Activated T-helper 1 cell treated with anti-CD3 and anti-CD28 coated beads, Interleukin-12 subunit alpha, Interleukin-12 subunit beta, Interleukin-2, Interleukin-4 antibody, amounts not matched to agents 30 ng/mL and 10 ng/mL and 1 ng/mL, durations not matched to agents 14 hours and 24 hours and 36 hours (primary cell): ENCODE measurements at regions of chr5 and their contacts with region 1.

Region 1: DNA sequence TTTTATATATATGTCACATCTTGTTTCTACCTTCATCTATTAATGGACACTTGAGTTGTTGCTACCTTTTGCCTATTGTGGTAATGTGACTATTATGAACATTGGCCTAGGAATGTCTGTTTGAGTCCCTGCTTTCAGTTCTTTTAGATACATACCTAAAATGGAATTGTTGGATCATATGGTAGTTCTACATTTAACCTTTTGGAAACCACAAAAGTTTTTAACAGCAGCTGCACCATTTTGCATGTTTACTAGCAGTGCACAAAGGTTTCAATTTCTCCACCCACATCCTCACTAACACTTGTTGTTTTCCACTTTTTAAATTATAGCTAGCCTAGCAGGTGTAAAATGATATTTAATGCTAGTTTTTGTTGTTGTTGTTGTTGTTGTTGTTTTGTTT is 88.4 kb downstream of the GALNT10 start:
- DNase-seq: no peak
- H3K4me3 Mint-ChIP-seq: no peak overlapping the region
- H3K27ac Mint-ChIP-seq: peak overlapping the region; percentile 25
- H3K4me1 Mint-ChIP-seq: peaks cover 51% of the 10 kb centered on the region
- H3K27me3 Mint-ChIP-seq: no peaks in the 10 kb centered on the region

Region 2: GRCh38 chr5:154249826-154250225 is 29.1 kb before region 1 on chr5:
- intact Hi-C with region 1: no loop called
- DNase-seq: no peak
- H3K4me3 Mint-ChIP-seq: no peak overlapping the region
- H3K27ac Mint-ChIP-seq: no peak overlapping the region
- H3K4me1 Mint-ChIP-seq: peaks cover 31% of the 10 kb centered on the region
- H3K27me3 Mint-ChIP-seq: no peaks in the 10 kb centered on the region

Region 3: DNA sequence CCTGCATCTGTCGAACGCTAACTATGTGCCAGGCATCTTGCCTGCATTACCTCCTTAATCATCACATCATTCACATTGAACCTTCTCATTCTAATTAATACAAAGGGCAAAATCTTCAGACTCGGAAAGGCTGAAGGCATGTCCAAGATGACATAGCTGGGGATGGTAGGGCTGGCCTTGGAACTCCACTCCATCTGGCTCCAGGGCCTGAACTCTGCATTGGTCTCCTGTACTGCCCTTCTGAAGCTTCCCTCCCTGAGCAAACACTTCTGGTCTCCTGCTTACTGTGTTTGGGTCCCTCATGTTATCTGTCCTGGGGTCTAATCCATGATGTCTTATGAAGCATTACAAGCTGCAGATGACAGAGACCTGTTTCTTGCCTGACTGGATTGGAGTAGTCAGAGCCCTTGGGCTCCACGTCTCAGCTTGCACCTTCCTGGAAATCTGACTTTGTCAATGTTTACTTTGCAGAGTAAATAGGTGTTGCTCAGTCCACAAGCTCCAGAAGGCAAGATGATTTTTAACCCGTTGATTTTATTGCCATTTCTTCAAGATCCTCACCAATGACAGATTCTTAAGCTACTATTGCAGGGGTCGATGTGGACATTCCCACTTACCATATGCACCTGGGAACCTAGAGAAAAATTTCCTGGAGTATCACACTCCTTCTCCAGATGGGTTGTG is 17.8 kb after region 1 on chr5:
- intact Hi-C with region 1: no loop called
- DNase-seq: no peak
- H3K4me3 Mint-ChIP-seq: no peak overlapping the region
- H3K27ac Mint-ChIP-seq: no peak overlapping the region
- H3K4me1 Mint-ChIP-seq: peaks cover 11% of the 10 kb centered on the region
- H3K27me3 Mint-ChIP-seq: no peaks in the 10 kb centered on the region

Region 4: DNA sequence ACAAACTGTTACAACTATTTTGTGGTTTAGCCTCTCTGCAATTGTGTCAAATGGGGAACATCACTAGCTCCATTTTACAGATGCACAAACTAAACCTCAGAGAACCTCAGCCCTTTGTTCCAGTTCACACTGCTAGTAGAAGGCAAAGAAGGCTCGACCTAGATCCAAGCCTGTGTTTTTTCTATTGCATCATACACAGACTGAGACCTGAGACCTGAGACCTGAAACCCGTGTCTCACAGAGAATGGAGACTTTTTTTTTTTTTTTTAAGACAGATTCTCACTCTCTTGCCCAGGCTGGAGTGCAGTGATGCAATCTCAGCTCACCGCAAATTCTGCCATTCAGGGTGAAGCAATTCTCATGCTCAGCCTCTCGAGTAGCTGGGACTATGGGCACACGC is 32.5 kb after region 1 on chr5:
- intact Hi-C with region 1: loop called (anchors 2 kb)
- DNase-seq: no peak
- H3K4me3 Mint-ChIP-seq: no peak overlapping the region
- H3K27ac Mint-ChIP-seq: no peak overlapping the region
- H3K4me1 Mint-ChIP-seq: peaks cover 44% of the 10 kb centered on the region
- H3K27me3 Mint-ChIP-seq: no peaks in the 10 kb centered on the region

Region 5: DNA sequence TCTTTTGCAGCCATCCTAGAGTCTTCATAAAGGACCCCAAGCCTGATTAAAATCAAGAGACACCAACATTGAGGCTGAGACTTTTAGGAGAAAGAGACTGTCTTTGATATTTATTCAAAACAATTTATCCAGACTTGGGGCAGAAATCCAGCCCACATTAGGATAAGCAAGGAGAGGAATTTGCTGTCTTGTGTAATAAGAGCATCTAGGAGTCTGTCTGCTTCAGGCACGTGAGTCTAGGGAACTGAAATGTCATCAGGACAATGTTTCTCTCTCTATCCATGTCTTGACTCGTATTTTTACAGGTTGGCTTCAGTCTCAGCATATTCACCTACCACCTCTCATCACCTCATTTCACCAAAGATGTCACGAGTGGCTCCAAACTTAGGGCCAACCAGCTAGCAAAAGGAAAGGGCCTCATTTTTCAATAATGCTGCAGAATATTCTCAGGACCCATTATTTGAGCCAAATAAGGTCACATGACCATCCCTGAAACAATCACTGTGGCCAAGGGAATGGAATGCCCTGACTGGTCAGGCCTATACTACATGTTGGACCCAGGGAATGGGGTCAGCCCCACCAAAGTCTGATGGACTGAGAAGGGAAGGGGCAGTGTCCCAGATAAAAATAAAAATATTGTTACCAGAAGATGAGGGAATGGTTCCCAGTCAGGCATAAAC is 96.6 kb after region 1 on chr5:
- intact Hi-C with region 1: loop called (anchors 1 kb)
- DNase-seq: no peak
- H3K4me3 Mint-ChIP-seq: no peak overlapping the region
- H3K27ac Mint-ChIP-seq: no peak overlapping the region
- H3K4me1 Mint-ChIP-seq: peaks cover under 1% of the 10 kb centered on the region
- H3K27me3 Mint-ChIP-seq: no peaks in the 10 kb centered on the region